ENCODE measurements at regions of chr10 and their contacts with region 1.

Region 1: DNA sequence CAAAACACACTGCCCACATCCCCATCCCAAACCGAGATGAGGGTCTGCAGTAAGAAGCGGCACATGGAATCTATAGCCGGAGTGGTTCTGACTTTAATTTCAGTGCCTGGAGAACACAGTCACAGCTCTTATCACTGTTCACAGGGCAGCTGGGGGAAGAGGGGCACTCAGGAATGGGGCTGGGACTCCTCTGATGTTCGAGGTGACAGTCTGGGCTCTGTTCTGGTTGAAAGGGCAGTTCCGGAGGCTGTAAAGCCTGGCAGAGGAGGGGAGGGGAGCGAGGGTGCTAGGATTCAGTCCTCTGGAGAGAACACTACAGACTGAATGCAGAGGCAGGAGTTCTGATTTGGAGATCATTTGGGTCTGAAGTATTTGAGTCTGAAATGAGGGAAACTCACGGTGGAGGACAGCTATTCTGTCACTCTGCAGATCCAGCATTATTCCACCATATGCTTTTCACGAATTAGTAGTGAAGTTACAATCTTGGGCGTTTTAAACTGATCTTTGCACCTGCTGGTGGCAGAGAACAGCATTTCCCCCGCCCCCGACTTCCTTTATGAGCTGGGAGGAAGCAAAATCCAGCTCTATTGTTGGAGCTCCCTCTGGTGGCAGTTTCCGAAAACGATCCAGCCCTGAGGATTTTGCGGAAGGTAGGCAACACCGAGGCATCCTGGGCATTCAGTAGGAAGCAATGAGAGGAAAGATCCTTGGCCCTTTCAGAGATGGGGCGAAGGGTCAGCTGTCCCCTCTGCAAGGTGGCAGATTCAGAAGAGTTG is 22.7 kb upstream of the KCNK18 start:
- DNase-seq: peak; percentile 92
- ATAC-seq: peak; percentile 81
- H3K4me3 ChIP-seq: peak overlapping the region; percentile 74
- H3K27ac ChIP-seq: no peak overlapping the region
- H3K4me1 ChIP-seq: no peaks in the 10 kb centered on the region
- H3K27me3 ChIP-seq: peaks cover 20% of the 10 kb centered on the region
- CTCF ChIP-seq: peak; percentile 78

Region 2: GRCh38 chr10:116170815-116171250 is 1003.8 kb before region 1 on chr10:
- CTCF ChIA-PET with region 1: no interaction called
- POLR2A ChIA-PET with region 1: no interaction called
- intact Hi-C with region 1: no loop called
- DNase-seq: no peak
- ATAC-seq: no peak
- H3K4me3 ChIP-seq: no peak overlapping the region
- H3K27ac ChIP-seq: no peak overlapping the region
- H3K4me1 ChIP-seq: no peaks in the 10 kb centered on the region
- H3K27me3 ChIP-seq: peaks cover 4% of the 10 kb centered on the region; the same call in 1 of the 2 replicates
- CTCF ChIP-seq: no peak

Region 3: DNA sequence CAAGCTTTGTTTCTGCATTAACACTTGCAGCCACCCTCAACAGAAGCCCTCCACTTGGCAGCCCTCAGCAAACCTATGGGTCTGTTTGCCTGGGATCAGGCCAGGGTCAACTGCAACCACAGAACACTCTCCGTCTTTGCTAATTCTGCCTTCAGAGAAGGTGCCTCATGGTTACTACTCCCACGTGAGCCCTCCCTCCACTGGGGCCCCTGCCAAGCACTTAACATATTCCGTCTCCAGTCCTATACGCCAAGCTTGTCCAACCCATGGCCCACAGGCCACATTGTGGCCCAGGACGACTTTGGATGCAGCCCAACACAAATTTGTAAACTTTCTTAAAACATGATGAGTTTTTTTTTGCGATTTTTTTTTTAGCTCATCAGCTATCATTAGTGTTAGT is 487.0 kb before region 1 on chr10:
- CTCF ChIA-PET with region 1: no interaction called
- POLR2A ChIA-PET with region 1: no interaction called
- intact Hi-C with region 1: loop called (anchors 2 kb)
- DNase-seq: no peak
- ATAC-seq: no peak
- H3K4me3 ChIP-seq: no peak overlapping the region
- H3K27ac ChIP-seq: no peak overlapping the region
- H3K4me1 ChIP-seq: no peaks in the 10 kb centered on the region
- H3K27me3 ChIP-seq: no peaks in the 10 kb centered on the region
- CTCF ChIP-seq: no peak

Region 4: DNA sequence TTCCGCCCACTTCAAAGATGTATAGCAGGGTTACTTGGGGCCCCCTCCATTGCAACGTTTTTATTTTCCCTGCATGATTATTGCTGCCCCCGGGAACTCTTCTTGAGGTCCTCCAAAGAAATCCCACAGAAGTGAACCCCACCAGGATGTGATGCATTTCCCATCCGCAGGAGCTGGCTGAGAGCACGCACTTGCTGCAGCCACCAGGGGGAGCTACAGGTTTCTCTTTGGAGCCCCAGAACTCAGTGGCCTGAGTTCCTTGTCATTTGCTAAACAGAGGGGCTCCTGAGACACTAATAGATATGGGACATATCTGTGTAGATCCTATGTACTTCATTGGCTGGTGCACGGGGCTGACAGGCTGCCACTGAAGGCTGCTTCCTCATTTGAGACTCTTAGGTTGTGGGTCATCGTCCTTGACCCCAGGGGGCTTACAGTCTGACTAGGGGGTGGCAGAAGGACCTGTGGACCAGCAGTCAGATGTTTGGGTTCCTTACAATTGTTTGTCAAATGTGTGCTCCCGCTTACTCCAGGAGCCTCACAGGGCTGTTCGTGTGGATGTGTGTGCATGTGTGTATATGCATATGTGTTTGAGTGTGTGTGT is 377.6 kb before region 1 on chr10:
- CTCF ChIA-PET with region 1: interaction called, 26 read pairs
- POLR2A ChIA-PET with region 1: no interaction called
- intact Hi-C with region 1: loop called (anchors 1 kb)
- DNase-seq: peak; percentile 74
- ATAC-seq: peak; percentile 78
- H3K4me3 ChIP-seq: no peak overlapping the region
- H3K27ac ChIP-seq: no peak overlapping the region
- H3K4me1 ChIP-seq: no peaks in the 10 kb centered on the region
- H3K27me3 ChIP-seq: no peaks in the 10 kb centered on the region
- CTCF ChIP-seq: peak; percentile 89

Region 5: DNA sequence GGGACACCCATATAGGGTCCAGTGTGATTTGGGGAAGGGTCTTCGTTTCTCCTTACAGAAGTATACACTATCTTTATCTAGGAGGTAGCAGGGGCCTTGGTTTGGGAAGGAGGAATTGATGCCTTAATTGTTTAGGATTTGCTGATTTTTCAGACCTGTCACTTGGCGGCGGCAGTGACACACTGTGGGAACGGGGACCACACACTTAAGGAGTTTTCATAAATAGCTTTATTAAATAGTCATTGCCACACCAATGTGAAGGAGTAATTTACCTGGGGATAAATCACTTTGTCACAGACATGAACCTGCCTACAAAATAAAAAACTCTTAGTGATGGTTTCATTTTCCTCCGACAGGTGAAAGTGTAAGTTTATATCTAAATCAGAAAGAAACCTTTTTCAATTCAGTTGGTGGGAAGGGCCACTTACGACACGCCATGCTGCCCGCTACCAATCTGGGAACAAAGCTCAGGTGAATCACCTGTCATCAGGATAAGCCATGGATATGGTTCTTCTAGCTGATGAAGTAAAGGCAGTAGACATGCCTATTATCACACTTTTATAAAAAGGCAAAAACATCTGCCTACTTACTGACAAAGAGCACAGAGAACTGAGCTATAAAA is 337.6 kb before region 1 on chr10:
- CTCF ChIA-PET with region 1: interaction called, 4 read pairs
- POLR2A ChIA-PET with region 1: no interaction called
- intact Hi-C with region 1: loop called (anchors 5 kb)
- DNase-seq: no peak
- ATAC-seq: no peak
- H3K4me3 ChIP-seq: no peak overlapping the region
- H3K27ac ChIP-seq: no peak overlapping the region
- H3K4me1 ChIP-seq: no peaks in the 10 kb centered on the region
- H3K27me3 ChIP-seq: no peaks in the 10 kb centered on the region
- CTCF ChIP-seq: no peak

Region 6: GRCh38 chr10:117226824-117227451 is 52.3 kb after region 1 on chr10:
- CTCF ChIA-PET with region 1: no interaction called
- POLR2A ChIA-PET with region 1: no interaction called
- intact Hi-C with region 1: no loop called
- DNase-seq: peak; percentile 56
- ATAC-seq: peak; percentile 57
- H3K4me3 ChIP-seq: no peak overlapping the region
- H3K27ac ChIP-seq: no peak overlapping the region
- H3K4me1 ChIP-seq: peaks cover under 1% of the 10 kb centered on the region; the same call in 1 of the 2 replicates
- H3K27me3 ChIP-seq: no peaks in the 10 kb centered on the region; the same call in 1 of the 2 replicates
- CTCF ChIP-seq: peak; percentile 77

Region 7: DNA sequence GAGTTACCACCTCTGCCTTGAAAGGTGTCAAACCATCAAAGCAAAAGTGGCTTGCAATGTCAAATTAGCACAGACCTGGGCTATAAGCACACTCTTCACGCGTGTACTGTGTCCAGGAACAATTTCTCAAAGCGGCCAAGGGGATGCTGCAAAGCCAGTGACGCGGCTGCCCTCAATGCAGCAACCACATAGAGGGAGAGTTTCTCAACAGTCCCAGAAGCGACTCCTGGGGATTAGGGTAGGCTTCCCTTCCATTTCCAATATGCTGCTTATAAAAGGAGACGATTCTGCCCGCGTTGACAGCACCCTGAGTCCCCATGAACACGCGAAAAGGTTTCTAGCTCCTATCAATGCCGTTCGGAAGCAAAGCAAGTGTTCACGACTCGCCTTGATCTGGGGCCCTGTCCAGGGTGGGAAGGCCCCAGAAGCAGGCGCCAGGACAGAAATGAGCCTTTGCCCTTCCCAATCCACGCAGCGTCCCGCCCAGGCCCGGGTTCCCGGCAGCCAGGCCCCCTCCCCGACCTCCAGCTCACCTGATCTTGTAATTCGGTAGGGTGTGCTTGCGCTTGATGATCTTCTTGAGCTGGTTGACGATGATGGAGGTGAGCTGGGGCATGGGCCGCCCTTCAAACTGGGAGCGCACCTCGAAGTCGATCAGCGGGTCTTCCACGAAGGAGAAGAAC is 199.3 kb after region 1 on chr10:
- CTCF ChIA-PET with region 1: no interaction called
- POLR2A ChIA-PET with region 1: no interaction called
- intact Hi-C with region 1: no loop called
- DNase-seq: peak; percentile 25
- ATAC-seq: 0 out of 2 replicates have a peak, but pooled peaks have one; percentile 7
- H3K4me3 ChIP-seq: peak overlapping the region; percentile 98
- H3K27ac ChIP-seq: peak overlapping the region; percentile 6; the same call in 1 of the 2 replicates
- H3K4me1 ChIP-seq: peaks cover 15% of the 10 kb centered on the region
- H3K27me3 ChIP-seq: no peaks in the 10 kb centered on the region
- CTCF ChIP-seq: no peak